IMR-90 (cell line): ENCODE measurements at regions of chr3 and their contacts with region 1.

Region 1: DNA sequence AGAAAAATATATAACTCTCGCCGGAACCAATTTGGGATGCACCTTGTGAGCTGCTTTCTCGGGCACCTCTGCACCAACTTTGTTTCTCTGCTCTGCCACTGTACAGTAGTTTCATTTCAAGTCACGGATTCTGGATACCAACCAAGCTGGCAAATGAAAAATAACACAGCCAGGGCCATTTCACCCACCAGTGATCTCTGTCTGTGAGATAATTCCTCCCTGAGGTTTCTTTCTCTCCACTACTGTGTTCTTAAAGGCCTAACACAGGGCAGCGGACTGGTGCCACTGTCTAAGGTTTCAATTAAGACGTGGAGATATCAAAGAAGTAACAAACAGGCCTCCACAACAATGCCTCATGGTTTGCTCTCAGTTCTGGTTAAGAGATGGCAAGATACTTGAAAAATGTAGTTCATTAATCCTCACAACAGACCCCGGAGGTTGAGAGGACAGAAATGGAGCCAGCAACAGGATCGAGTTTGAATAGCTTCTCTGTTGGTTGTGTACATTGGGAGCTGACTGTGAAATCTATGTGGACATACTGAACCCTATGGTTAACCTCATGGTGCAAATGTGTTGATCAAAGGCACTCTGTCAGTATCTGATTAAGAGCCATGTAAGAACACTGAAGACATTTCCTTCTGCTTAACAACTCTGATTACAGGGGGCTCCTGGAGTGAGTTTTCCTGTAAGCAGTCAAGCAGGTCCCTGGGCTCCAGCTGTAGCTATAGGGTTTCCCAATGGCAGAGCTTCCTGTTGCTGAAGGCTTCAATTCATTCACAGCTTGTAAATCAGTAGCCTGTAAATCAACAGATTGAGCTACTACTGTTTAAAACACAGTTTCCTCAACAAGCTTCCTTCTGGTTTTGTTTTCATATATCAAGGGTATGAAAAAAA is 470.5 kb downstream of the EPHA3 start:
- DNase-seq: no peak
- ATAC-seq: no peak
- H3K4me3 ChIP-seq: no peak overlapping the region
- H3K27ac ChIP-seq: no peak overlapping the region
- H3K4me1 ChIP-seq: no peaks in the 10 kb centered on the region
- H3K27me3 ChIP-seq: no peaks in the 10 kb centered on the region
- CTCF ChIP-seq: no peak
- POLR2A ChIP-seq: no peak
- RAD21 ChIP-seq: no peak

Region 2: GRCh38 chr3:89179355-89180001 is 398.4 kb before region 1 on chr3:
- CTCF ChIA-PET with region 1: no interaction called
- POLR2A ChIA-PET with region 1: no interaction called
- dilution Hi-C with region 1: no loop called
- in situ Hi-C with region 1: no loop called
- intact Hi-C with region 1: loop called (anchors 1 kb)
- DNase-seq: no peak
- ATAC-seq: no peak
- H3K4me3 ChIP-seq: no peak overlapping the region
- H3K27ac ChIP-seq: no peak overlapping the region
- H3K4me1 ChIP-seq: no peaks in the 10 kb centered on the region
- H3K27me3 ChIP-seq: no peaks in the 10 kb centered on the region
- CTCF ChIP-seq: no peak
- POLR2A ChIP-seq: no peak
- RAD21 ChIP-seq: no peak

Region 3: DNA sequence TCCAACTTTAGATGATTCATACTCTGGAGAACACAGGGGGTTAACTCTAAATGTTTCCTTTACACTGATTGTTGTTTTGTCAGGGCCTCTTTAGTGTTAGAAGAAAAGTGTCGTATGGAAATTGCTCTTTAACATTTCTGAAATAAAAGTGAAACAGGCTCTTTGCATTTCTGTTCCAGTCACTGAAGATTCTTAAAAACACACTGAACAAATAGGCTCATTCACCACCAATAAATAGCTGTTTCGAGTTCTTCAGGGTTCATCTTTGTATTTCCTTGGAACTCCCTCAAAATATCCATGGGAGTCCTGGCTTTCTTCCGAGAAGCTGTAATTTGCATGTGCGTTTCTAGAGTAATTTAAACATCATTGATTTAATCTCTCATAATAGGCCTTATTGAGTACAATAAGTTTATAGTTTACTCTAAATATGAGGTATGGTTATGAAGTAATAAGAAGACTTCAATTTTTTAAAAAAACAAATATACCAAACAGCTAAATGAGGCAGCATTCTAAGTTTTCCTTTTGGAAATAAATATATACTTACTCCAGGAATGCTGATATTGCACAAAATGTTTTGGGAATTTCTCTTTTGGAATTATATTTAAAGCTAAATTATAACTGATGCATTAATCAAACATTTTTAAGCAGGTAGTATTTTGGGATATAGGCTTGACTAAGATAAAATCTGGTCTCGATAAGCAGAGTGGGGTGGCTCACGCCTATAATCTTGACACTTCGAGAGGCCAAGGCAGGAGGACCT is 143.1 kb before region 1 on chr3:
- CTCF ChIA-PET with region 1: no interaction called
- POLR2A ChIA-PET with region 1: no interaction called
- dilution Hi-C with region 1: no loop called
- in situ Hi-C with region 1: no loop called
- intact Hi-C with region 1: no loop called
- DNase-seq: no peak
- ATAC-seq: no peak
- H3K4me3 ChIP-seq: no peak overlapping the region
- H3K27ac ChIP-seq: no peak overlapping the region
- H3K4me1 ChIP-seq: no peaks in the 10 kb centered on the region
- H3K27me3 ChIP-seq: no peaks in the 10 kb centered on the region
- CTCF ChIP-seq: no peak
- POLR2A ChIP-seq: no peak
- RAD21 ChIP-seq: no peak